Caco-2 (cell line): ENCODE measurements at regions of chr22 and their contacts with region 1.

Region 1: DNA sequence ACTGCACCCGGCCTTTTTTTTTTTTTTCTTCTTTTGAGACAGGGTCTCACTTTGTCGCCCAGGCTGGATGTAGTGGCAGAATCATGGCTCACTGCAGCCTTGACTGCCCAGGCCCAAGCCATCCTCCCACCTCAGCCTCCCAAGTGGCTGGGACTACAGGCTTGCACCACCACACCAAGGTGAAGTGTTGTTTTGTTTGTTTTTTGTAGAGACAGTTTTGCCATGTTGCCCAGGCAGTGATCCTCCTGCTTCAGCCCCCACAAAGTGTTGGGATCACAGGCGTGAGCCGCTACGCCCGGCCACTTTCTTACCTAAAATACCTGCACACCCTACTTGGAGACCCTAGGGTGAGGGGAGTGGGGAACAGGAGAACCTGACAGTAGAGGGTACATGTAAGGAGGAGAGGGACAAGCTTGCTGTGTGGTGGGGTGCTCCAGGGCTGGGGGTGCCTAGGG is 4.5 kb upstream of the AIFM3 start:
- DNase-seq: no peak
- H3K4me3 ChIP-seq: no peak overlapping the region
- H3K4me3 Mint-ChIP-seq: no peak overlapping the region
- H3K27ac Mint-ChIP-seq: no peak overlapping the region
- H3K4me1 ChIP-seq: 0 out of 2 replicates have a peak, but pooled peaks cover 5% of the 10 kb centered on the region
- H3K4me1 Mint-ChIP-seq: no peaks in the 10 kb centered on the region
- H3K27me3 ChIP-seq: no peaks in the 10 kb centered on the region
- H3K27me3 Mint-ChIP-seq: no peaks in the 10 kb centered on the region
- CTCF ChIP-seq: no peak

Region 2: GRCh38 chr22:20981787-20982562 is 19.5 kb after region 1 on chr22 and contains the start of gene LZTR1:
- CTCF ChIA-PET with region 1: interaction called, 12 read pairs
- POLR2A ChIA-PET with region 1: interaction called, 11 read pairs
- intact Hi-C with region 1: no loop called
- DNase-seq: peak; percentile 78 to 88
- H3K4me3 ChIP-seq: peak within 1 kb of the TSS; percentile 95
- H3K4me3 Mint-ChIP-seq: peak within 1 kb of the TSS; percentile 85
- H3K27ac Mint-ChIP-seq: peak within 1 kb of the TSS; percentile 71
- H3K4me1 ChIP-seq: peaks cover 14% of the 10 kb centered on the region; the same call in 1 of the 2 replicates
- H3K4me1 Mint-ChIP-seq: no peaks in the 10 kb centered on the region
- H3K27me3 ChIP-seq: no peaks in the 10 kb centered on the region
- H3K27me3 Mint-ChIP-seq: no peaks in the 10 kb centered on the region
- CTCF ChIP-seq: peak; percentile 51 to 84
- total RNA-seq, gene LZTR1: 37.2 and 41.3 TPM in 2 replicates